Endothelial cell of umbilical vein (primary cell): ENCODE measurements at regions of chr7 and their contacts with region 1.

Region 1: GRCh38 chr7:134632937-134633540 is 13.6 kb upstream of the BPGM start:
- DNase-seq: peak; percentile 79
- H3K4me3 ChIP-seq: no peak overlapping the region
- H3K27ac ChIP-seq: peak overlapping the region; percentile 20
- H3K4me1 ChIP-seq: peaks cover 29% of the 10 kb centered on the region
- H3K27me3 ChIP-seq: no peaks in the 10 kb centered on the region
- CTCF ChIP-seq: peak; percentile 58 to 70
- POLR2A ChIP-seq: no peak

Region 2: DNA sequence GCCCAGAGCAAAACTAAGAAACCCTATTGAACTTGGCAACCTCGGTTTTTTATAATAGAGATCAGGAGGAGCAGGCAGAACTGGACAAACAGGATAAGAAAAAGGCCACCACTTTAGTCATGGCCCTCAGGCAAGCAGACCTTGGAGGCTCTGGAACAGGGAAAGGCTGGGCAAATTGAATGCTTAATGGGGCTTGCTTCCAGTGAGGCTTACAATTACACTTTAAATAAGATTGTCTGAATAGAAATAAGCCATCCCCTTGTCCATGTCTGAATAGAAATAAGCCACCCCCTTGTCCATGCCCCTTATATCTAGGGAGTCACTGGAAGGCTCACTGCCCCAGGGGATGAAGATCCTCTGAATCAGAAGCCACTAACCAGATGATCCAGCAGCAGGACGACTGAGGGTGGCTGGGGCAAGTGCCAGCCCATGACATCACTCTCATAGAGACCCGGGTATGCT is 43.5 kb before region 1 on chr7:
- CTCF ChIA-PET with region 1: no interaction called
- POLR2A ChIA-PET with region 1: no interaction called
- dilution Hi-C with region 1: no loop called
- intact Hi-C with region 1: no loop called
- DNase-seq: no peak
- H3K4me3 ChIP-seq: no peak overlapping the region
- H3K27ac ChIP-seq: no peak overlapping the region
- H3K4me1 ChIP-seq: peaks cover 12% of the 10 kb centered on the region
- H3K27me3 ChIP-seq: peaks cover 0 to 5% of the 10 kb centered on the region in 2 experiments
- CTCF ChIP-seq: no peak
- POLR2A ChIP-seq: no peak

Region 3: DNA sequence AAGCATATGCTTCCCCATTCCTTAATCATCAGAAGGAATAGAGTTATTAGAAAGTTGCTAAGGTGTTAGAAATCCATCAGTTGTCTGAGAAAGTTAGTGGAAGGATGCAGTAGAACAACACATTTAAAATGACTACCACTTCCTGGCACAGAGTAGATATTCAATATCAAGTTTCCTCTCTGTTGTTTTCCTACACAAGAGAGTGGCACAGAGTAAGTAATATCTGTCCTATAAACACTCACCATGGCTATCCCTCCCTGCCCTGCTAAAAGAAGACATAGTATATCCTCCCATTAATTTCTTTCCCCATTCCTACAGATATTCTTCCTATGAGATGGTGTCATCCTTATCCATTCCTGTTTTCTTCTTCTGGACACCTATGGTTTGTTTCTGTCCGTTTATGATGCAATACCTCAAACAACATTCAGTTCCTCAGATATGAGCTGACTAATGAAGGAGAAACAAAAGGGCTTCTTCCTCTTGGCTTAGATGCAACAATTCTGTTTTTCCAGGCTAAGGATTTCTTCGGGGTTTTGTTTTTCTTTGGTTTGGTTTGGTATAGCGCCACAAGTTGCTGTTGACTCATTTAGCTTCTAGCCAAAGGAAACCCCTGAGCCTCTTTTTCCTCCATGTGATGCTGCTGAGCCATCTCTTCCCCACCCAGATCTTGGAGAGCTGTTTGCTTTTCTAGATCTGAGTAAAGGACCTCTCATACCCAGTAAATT is 19.3 kb before region 1 on chr7:
- CTCF ChIA-PET with region 1: interaction called, 53 read pairs
- POLR2A ChIA-PET with region 1: no interaction called
- dilution Hi-C with region 1: no loop called
- intact Hi-C with region 1: loop called (anchors 1 kb)
- DNase-seq: peak; percentile 99
- H3K4me3 ChIP-seq: peak overlapping the region in 1 of 3 experiments; percentile 3
- H3K27ac ChIP-seq: peak overlapping the region; percentile 85
- H3K4me1 ChIP-seq: peaks cover 28% of the 10 kb centered on the region
- H3K27me3 ChIP-seq: no peaks in the 10 kb centered on the region
- CTCF ChIP-seq: no peak
- POLR2A ChIP-seq: peak; percentile 64

Region 4: GRCh38 chr7:134669845-134670373 is 36.9 kb after region 1 on chr7:
- CTCF ChIA-PET with region 1: interaction called, 31 read pairs
- POLR2A ChIA-PET with region 1: no interaction called
- dilution Hi-C with region 1: no loop called
- intact Hi-C with region 1: loop called (anchors 1 kb)
- DNase-seq: peak; percentile 99
- H3K4me3 ChIP-seq: peak overlapping the region in 1 of 3 experiments; percentile 10
- H3K27ac ChIP-seq: peak overlapping the region; percentile 100
- H3K4me1 ChIP-seq: peaks cover 50% of the 10 kb centered on the region
- H3K27me3 ChIP-seq: no peaks in the 10 kb centered on the region
- CTCF ChIP-seq: no peak
- POLR2A ChIP-seq: no peak

Region 5: GRCh38 chr7:134724606-134725005 is 91.6 kb after region 1 on chr7:
- CTCF ChIA-PET with region 1: interaction called, 15 read pairs
- POLR2A ChIA-PET with region 1: no interaction called
- dilution Hi-C with region 1: no loop called
- intact Hi-C with region 1: no loop called
- DNase-seq: peak; percentile 56
- H3K4me3 ChIP-seq: no peak overlapping the region
- H3K27ac ChIP-seq: no peak overlapping the region
- H3K4me1 ChIP-seq: no peaks in the 10 kb centered on the region
- H3K27me3 ChIP-seq: no peaks in the 10 kb centered on the region
- CTCF ChIP-seq: peak; percentile 58 to 72
- POLR2A ChIP-seq: no peak

Region 6: GRCh38 chr7:134778941-134779740 is 146.1 kb after region 1 on chr7 and contains the start of gene CALD1:
- CTCF ChIA-PET with region 1: interaction called, 3 read pairs
- POLR2A ChIA-PET with region 1: no interaction called
- dilution Hi-C with region 1: no loop called
- intact Hi-C with region 1: loop called (anchors 1 kb)
- DNase-seq: peak; percentile 99
- H3K4me3 ChIP-seq: peak within 1 kb of the TSS; percentile 54 to 100 (median 98)
- H3K27ac ChIP-seq: peak within 1 kb of the TSS; percentile 97
- H3K4me1 ChIP-seq: peaks cover 51% of the 10 kb centered on the region
- H3K27me3 ChIP-seq: no peaks in the 10 kb centered on the region
- CTCF ChIP-seq: no peak
- POLR2A ChIP-seq: peak; percentile 98
- total RNA-seq, gene CALD1: 307 and 313 TPM in 2 replicates

Region 7: GRCh38 chr7:135170274-135170997 is 537.4 kb after region 1 on chr7 and contains the start of gene CYREN:
- CTCF ChIA-PET with region 1: interaction called, 5 read pairs
- POLR2A ChIA-PET with region 1: no interaction called
- dilution Hi-C with region 1: no loop called
- intact Hi-C with region 1: loop called (anchors 5 kb)
- DNase-seq: peak; percentile 92
- H3K4me3 ChIP-seq: peak within 1 kb of the TSS; percentile 47 to 75 (median 66)
- H3K27ac ChIP-seq: peak within 1 kb of the TSS; percentile 63
- H3K4me1 ChIP-seq: peaks cover 23% of the 10 kb centered on the region
- H3K27me3 ChIP-seq: no peaks in the 10 kb centered on the region
- CTCF ChIP-seq: peak; percentile 69 to 78
- POLR2A ChIP-seq: peak; percentile 13
- total RNA-seq, gene CYREN: 26.8 and 30.8 TPM in 2 replicates